ENCODE measurements at regions of chr13 and their contacts with region 1.

Region 1: GRCh38 chr13:51311957-51312520 is 27.5 kb upstream of the SERPINE3 start:
- DNase-seq: no peak
- H3K4me3 ChIP-seq: no peak overlapping the region
- H3K27ac ChIP-seq: no peak overlapping the region
- H3K4me1 ChIP-seq: peaks cover 4 to 19% (median 6%) of the 10 kb centered on the region in 4 experiments; a peak in 4 of 7 replicates
- H3K27me3 ChIP-seq: no peaks in the 10 kb centered on the region
- CTCF ChIP-seq: no peak
- EP300 ChIP-seq: no peak
- POLR2A ChIP-seq: no peak
- RAD21 ChIP-seq: no peak

Region 2: GRCh38 chr13:51322826-51323225 is 10.8 kb after region 1 on chr13:
- CTCF ChIA-PET with region 1: interaction called, 14 read pairs
- POLR2A ChIA-PET with region 1: interaction called, 5 read pairs
- DNase-seq: no peak
- H3K4me3 ChIP-seq: no peak overlapping the region
- H3K27ac ChIP-seq: no peak overlapping the region
- H3K4me1 ChIP-seq: peaks cover 4 to 16% (median 12%) of the 10 kb centered on the region in 4 experiments; a peak in 6 of 7 replicates
- H3K27me3 ChIP-seq: no peaks in the 10 kb centered on the region
- CTCF ChIP-seq: peak in 1 of 3 experiments; percentile 16; a peak in 1 of 4 replicates
- EP300 ChIP-seq: no peak
- POLR2A ChIP-seq: no peak
- RAD21 ChIP-seq: no peak